Transverse colon (tissue), 4 donors: ENCODE measurements at regions of chr7 and their contacts with region 1.

Region 1: DNA sequence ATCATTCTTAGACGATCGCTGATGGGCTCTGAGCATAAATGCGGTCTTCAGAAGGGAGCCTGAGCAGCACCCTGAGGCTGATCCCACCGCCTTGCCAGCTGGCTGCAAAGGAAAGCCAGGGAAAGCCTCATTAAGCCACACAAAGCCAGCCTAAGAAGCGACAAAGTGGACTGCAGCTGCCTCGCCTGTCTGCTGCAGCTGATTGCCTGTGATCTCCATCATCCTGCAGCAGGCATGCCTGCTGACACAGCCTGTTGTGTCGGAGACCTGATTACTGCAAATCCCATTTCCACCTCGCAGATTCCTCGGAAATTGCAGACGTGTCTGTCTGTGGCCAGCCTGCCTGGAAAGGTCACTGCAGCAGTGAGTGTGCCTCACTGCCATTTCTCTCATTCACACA is 1087.0 kb upstream of the AUTS2 start:
- DNase-seq: no peak
- H3K4me3 ChIP-seq: no peak overlapping the region
- H3K27ac ChIP-seq: no peak overlapping the region
- H3K4me1 ChIP-seq: no peaks in the 10 kb centered on the region
- H3K27me3 ChIP-seq: no peaks in the 10 kb centered on the region
- CTCF ChIP-seq: no peak
- EP300 ChIP-seq: no peak
- POLR2A ChIP-seq: no peak

Region 2: DNA sequence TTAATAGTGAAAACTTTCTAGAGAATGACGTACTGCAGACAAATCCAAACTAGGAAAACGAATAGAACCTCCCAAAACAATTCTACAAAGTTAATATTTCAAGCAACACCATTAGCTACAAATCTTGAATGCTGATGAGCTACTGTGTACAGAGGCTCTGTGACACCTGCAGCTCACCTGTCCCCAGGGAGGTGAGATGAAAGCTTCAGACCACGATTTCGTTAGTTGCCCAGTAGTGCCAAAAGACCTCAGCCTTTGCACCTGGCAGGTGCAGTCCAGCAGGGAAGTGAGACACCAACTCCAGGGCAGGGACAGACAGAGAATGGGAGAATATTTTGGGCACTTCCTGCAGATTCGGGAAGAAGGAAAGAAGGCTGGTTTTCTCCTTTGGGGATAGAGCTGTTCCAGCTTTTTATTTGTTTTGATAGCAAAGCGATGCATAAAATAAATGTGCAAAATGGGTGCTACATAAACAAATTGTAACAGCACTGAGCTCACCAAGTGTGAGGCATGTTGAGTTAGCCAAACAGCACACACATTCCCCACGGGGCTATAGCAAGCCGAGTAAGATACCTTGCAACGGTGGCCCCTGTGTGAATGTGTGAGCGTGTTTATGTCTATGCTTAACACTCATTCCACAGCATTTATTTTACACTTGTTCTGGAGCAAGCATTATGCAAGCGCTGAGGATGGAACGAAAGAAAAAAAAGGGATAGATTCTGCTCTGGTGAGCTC is 62.2 kb after region 1 on chr7:
- in situ Hi-C with region 1: loop called in 1 of 4 experiments (anchors 10 kb)
- intact Hi-C with region 1: no loop called
- DNase-seq: no peak
- H3K4me3 ChIP-seq: no peak overlapping the region
- H3K27ac ChIP-seq: no peak overlapping the region
- H3K4me1 ChIP-seq: no peaks in the 10 kb centered on the region
- H3K27me3 ChIP-seq: no peaks in the 10 kb centered on the region
- CTCF ChIP-seq: no peak
- EP300 ChIP-seq: no peak
- POLR2A ChIP-seq: no peak